ENCODE measurements at regions of chr2 and their contacts with region 1.

Region 1: DNA sequence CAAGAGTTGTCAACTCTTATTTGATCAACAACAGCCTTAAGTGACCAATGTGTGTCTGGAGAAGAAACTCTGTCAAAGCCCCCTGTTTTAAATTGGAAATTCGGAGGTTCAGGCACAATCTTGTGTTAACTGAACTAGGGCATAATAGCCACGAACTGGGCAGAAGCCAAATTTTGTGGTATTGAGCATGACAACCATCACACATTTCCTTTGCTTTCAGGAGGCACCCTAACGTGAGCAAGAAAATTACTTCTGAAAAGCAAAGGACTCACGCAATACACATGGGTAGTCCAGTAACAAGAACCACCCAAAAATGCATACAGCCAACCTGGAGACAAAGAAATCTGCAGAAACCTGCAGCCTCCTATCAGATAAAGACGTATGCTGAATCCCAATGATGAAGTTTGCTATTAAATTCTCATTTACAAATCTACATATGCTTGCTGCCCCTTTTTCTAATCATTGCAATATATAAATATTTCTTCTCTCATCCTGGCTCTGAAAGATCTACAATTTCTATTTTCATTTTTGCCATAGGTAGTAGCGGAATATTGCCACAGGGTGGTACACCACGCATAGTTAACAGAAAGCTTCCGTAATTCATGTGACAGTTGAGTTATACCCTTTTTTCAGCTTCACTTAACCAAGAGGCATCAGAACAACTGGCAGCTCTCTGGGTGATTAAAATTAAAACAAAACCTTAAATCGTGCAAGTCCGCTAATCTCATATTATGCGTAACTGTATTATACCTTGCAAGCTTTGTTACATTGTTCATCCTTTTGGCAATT is 495.8 kb downstream of the NRXN1 start:
- DNase-seq: peak; percentile 14
- H3K4me3 ChIP-seq: no peak overlapping the region
- H3K27ac ChIP-seq: no peak overlapping the region
- H3K4me1 ChIP-seq: no peaks in the 10 kb centered on the region
- H3K27me3 ChIP-seq: no peaks in the 10 kb centered on the region
- CTCF ChIP-seq: peak; percentile 70
- EP300 ChIP-seq: no peak
- RAD21 ChIP-seq: peak; percentile 87

Region 2: DNA sequence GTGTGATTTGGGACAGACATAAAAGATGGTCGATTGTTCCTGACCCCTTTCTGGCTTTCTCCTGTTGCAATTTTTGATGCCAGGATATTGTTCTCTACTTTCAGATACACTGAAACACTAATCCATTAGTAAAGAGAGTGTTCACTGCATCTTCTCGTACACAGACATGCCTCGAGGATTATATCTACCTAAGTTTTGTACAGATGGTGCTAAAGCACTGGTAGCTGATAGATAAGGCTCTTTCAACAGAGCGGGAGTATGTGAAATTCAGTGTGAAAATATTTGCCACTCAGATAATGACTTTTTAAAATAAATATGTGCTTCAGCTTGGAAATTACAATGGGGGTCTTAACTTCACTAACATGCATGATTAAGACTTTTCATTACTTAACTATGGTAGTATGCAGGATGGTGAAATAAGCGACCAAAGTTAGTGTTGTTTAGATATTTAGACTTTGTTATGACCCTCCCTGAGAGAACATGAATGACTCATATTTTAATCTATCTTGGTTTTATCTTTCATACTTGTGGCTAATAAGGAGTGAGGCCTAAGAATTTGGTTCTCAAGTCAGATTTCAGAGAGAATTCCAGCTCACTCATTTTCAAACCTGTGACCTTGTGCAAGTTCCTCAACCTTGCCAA is 20.9 kb after region 1 on chr2:
- CTCF ChIA-PET with region 1: interaction called, 11 read pairs
- POLR2A ChIA-PET with region 1: no interaction called
- DNase-seq: no peak
- H3K4me3 ChIP-seq: no peak overlapping the region
- H3K27ac ChIP-seq: no peak overlapping the region
- H3K4me1 ChIP-seq: no peaks in the 10 kb centered on the region; a peak in 1 of 4 replicates
- H3K27me3 ChIP-seq: no peaks in the 10 kb centered on the region
- CTCF ChIP-seq: no peak
- EP300 ChIP-seq: no peak
- RAD21 ChIP-seq: no peak

Region 3: DNA sequence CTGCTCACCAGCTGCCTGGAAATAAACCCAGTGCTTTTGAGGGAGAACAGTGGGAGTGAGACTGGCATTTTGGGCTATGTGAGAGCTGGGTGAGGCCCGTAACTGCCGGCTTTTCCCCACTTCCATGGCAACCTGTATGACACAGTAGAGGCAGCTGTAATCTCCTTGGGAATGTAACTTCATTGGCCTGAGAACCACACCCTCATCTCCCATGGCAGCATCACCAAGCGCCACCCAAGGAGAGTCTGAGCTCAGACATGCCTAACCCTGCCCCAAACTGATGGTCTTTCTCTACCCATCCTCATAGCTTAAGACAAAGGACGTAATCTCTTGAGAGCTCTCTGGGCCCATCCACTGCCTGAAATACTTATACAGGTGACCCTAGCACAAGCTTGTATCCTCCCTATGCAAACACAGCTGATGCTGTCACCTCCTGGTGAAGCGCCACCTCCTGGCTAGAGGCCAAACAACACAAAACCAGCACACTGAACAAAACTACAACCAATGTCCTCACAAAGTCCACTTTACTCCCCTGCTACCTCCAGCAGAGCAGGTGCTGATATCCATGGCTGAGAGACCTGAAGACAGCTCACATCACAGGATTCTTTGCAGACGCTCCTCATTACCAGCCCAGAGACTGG is 1259.2 kb after region 1 on chr2:
- CTCF ChIA-PET with region 1: interaction called, 18 read pairs
- POLR2A ChIA-PET with region 1: no interaction called
- DNase-seq: peak; percentile 27
- H3K4me3 ChIP-seq: no peak overlapping the region
- H3K27ac ChIP-seq: no peak overlapping the region
- H3K4me1 ChIP-seq: no peaks in the 10 kb centered on the region
- H3K27me3 ChIP-seq: no peaks in the 10 kb centered on the region
- CTCF ChIP-seq: peak; percentile 43
- EP300 ChIP-seq: no peak
- RAD21 ChIP-seq: peak; percentile 51

Measured in SK-N-SH (cell line).